Lower lobe of right lung (tissue), 2 donors: ENCODE measurements at regions of chr12 and their contacts with region 1.

Region 1: GRCh38 chr12:27014085-27014858 is at the start of gene TM7SF3:
- DNase-seq: peak; percentile 98
- ATAC-seq: peak; percentile 93 to 98
- H3K4me3 ChIP-seq: peak within 1 kb of the TSS; percentile 88
- H3K27ac ChIP-seq: peak within 1 kb of the TSS; percentile 95
- H3K4me1 ChIP-seq: peaks cover 58% of the 10 kb centered on the region
- H3K27me3 ChIP-seq: no peaks in the 10 kb centered on the region
- CTCF ChIP-seq: peak; percentile 99
- total RNA-seq, gene TM7SF3: 70.9 TPM

Region 2: GRCh38 chr12:26937875-26938700 is 76.2 kb before region 1 on chr12 and contains the starts of genes FGFR1OP2 and INTS13:
- intact Hi-C with region 1: loop called (anchors 10 kb)
- DNase-seq: peak; percentile 99
- ATAC-seq: peak; percentile 99
- H3K4me3 ChIP-seq: peak within 1 kb of the TSS; percentile 82
- H3K27ac ChIP-seq: peak within 1 kb of the TSS; percentile 96
- H3K4me1 ChIP-seq: peaks cover 57% of the 10 kb centered on the region
- H3K27me3 ChIP-seq: no peaks in the 10 kb centered on the region
- CTCF ChIP-seq: no peak
- total RNA-seq, gene FGFR1OP2: 55.2 TPM
- total RNA-seq, gene INTS13: 14.1 TPM

Region 3: GRCh38 chr12:27208414-27208750 is 194.1 kb after region 1 on chr12:
- intact Hi-C with region 1: no loop called
- DNase-seq: no peak
- ATAC-seq: no peak
- H3K4me3 ChIP-seq: no peak overlapping the region
- H3K27ac ChIP-seq: no peak overlapping the region
- H3K4me1 ChIP-seq: no peaks in the 10 kb centered on the region
- H3K27me3 ChIP-seq: no peaks in the 10 kb centered on the region
- CTCF ChIP-seq: no peak

Region 4: DNA sequence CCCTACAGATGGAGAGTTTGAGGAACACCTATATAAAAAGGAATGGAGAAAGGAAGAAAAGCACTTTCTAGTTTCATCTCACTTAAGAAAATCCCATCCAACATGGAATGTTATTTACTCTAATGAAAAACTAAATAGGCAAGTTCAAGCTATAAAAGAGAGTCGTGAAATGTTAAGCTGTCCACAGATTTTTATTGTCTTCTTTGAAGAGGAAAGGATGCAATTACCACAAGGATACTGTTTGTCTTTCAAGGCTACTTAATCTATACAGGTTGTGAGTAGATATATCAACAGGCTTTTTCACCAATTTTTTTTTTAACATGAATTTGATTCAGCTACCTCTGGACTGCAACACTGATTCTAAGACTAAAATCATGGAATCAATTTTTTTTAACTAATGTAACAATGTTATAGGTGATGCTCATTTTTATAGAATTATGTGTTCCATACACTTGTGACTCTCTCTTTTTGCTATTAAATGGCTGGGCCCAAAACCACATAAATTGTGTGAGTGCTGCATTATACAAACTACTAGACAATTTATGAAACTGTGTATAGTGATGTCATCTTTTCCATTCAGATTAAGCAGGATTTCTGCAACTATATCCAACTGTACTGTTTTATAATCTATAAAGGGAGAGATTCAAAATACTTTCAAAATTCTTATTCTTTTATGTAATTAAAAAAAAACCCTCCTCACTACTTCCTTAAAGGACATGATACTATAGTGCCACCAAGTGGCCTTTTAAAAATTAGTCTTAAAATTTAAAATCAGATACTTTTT is 291.6 kb after region 1 on chr12:
- intact Hi-C with region 1: loop called (anchors 10 kb)
- DNase-seq: no peak
- ATAC-seq: peak in 1 of 2 donors; percentile 40
- H3K4me3 ChIP-seq: no peak overlapping the region
- H3K27ac ChIP-seq: no peak overlapping the region
- H3K4me1 ChIP-seq: no peaks in the 10 kb centered on the region
- H3K27me3 ChIP-seq: no peaks in the 10 kb centered on the region
- CTCF ChIP-seq: peak; percentile 57